ENCODE measurements at regions of chr17 and their contacts with region 1.

Region 1: DNA sequence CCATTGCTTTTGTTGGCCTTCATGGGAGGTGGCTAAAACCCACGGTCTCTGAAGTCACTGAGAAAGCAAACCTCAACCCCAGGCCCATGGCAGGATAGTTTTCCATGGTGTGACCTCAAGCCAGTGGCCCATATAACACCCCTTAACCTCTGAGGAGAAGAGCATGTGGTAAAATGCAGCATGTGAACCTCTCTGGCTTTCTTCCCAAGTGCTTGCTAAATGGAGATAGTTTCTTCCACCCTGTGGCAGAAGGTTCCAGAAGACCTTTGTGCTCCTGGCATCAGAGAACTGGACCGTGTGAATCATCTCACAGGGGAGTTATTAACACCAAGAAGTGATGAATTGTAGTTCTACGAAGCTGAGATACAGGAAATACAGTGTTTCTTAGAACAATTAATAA is 47.3 kb downstream of the MYOCD start:
- DNase-seq: no peak
- H3K4me3 ChIP-seq: no peak overlapping the region
- H3K27ac ChIP-seq: no peak overlapping the region
- H3K4me1 ChIP-seq: no peaks in the 10 kb centered on the region
- CTCF ChIP-seq: no peak

Region 2: GRCh38 chr17:12627177-12627629 is 85.7 kb before region 1 on chr17:
- CTCF ChIA-PET with region 1: no interaction called
- POLR2A ChIA-PET with region 1: no interaction called
- intact Hi-C with region 1: no loop called
- DNase-seq: no peak
- H3K4me3 ChIP-seq: no peak overlapping the region
- H3K27ac ChIP-seq: no peak overlapping the region
- H3K4me1 ChIP-seq: no peaks in the 10 kb centered on the region
- CTCF ChIP-seq: no peak

Region 3: GRCh38 chr17:12673788-12674187 is 39.2 kb before region 1 on chr17:
- CTCF ChIA-PET with region 1: no interaction called
- POLR2A ChIA-PET with region 1: no interaction called
- intact Hi-C with region 1: no loop called
- DNase-seq: no peak
- H3K4me3 ChIP-seq: no peak overlapping the region
- H3K27ac ChIP-seq: no peak overlapping the region
- H3K4me1 ChIP-seq: no peaks in the 10 kb centered on the region
- CTCF ChIP-seq: no peak

Region 4: DNA sequence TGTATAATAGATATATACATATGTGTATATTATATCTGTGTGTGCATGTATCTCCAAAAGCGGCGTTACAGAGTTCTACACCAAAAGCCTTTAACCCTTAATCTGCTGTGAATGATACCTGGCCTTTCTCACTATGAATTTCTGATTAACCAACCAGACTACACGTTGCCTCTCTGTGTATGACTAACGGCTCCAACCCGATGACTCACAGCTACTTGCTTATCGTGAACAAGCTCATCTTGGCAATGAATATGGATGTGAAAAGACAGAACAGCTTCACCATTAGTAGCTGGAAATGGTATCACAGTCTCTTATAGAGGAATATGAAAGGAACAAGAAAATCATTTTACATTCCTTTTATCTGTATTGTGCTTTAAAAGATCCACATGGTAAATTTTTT is 52.6 kb after region 1 on chr17:
- CTCF ChIA-PET with region 1: no interaction called
- POLR2A ChIA-PET with region 1: no interaction called
- intact Hi-C with region 1: loop called (anchors 10 kb)
- DNase-seq: no peak
- H3K4me3 ChIP-seq: no peak overlapping the region
- H3K27ac ChIP-seq: no peak overlapping the region
- H3K4me1 ChIP-seq: no peaks in the 10 kb centered on the region
- CTCF ChIP-seq: no peak

Region 5: GRCh38 chr17:12789075-12789776 is 76.3 kb after region 1 on chr17 and contains the start of gene ARHGAP44:
- CTCF ChIA-PET with region 1: no interaction called
- POLR2A ChIA-PET with region 1: no interaction called
- intact Hi-C with region 1: no loop called
- DNase-seq: peak; percentile 72
- H3K4me3 ChIP-seq: peak within 1 kb of the TSS; percentile 93
- H3K27ac ChIP-seq: no peak within 1 kb of the TSS
- H3K4me1 ChIP-seq: peaks cover 10% of the 10 kb centered on the region
- CTCF ChIP-seq: no peak
- total RNA-seq, gene ARHGAP44: 11.1 and 13.7 TPM in 2 replicates

Region 6: GRCh38 chr17:13154398-13154797 is 441.5 kb after region 1 on chr17:
- CTCF ChIA-PET with region 1: no interaction called
- POLR2A ChIA-PET with region 1: no interaction called
- intact Hi-C with region 1: no loop called
- DNase-seq: no peak
- H3K4me3 ChIP-seq: no peak overlapping the region
- H3K27ac ChIP-seq: no peak overlapping the region
- H3K4me1 ChIP-seq: no peaks in the 10 kb centered on the region
- CTCF ChIP-seq: no peak